ENCODE measurements at regions of chr1 and their contacts with region 1.

Region 1: GRCh38 chr1:203625628-203626019 is 1.0 kb upstream of the ATP2B4 start:
- DNase-seq: peak; percentile 89
- H3K4me3 Mint-ChIP-seq: peak overlapping the region; percentile 96
- H3K27ac Mint-ChIP-seq: peak overlapping the region; percentile 97
- H3K4me1 Mint-ChIP-seq: peaks cover 78% of the 10 kb centered on the region
- H3K27me3 Mint-ChIP-seq: no peaks in the 10 kb centered on the region

Region 2: DNA sequence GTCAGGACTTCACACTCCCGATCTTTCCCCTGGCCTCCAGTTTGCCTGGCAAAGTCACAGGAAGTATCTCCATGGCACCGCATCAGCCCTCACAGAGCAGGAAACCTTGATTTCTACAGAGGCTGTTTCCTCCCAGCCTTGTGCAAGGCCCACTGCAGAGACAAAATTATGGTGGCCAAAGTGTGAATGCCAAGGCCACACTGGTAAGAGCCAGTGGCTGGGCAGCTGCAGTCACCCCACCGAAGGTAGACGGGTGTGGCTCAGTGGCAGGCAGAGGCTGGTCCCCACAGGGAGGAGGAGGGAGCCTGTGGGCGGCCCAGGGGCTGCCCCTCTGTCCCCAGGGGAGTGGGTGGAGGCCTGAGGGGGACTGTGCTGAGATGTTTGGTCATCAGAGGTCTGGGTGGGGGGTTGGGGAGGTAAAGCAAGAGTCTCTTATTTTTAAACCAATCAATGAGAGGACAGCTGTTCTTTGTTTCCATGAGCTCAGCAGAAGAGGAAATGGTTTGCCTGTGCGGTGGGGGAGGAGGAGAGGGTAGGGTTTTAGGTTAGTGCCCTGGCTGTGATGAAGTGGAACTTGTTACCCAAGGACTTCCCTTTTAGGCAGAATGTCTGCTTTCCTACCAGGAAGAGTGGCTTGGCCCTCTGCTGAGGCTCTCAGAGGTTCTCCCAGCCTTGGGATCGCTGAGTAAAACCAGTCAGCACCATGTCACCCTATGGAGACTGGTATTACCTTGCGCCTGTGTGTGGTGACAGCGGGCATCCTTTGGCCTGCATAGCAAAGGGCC is 338.3 kb before region 1 on chr1:
- intact Hi-C with region 1: loop called (anchors 5 kb)
- DNase-seq: peak; percentile 95
- H3K4me3 Mint-ChIP-seq: peak overlapping the region; percentile 82
- H3K27ac Mint-ChIP-seq: peak overlapping the region; percentile 97
- H3K4me1 Mint-ChIP-seq: peaks cover 69% of the 10 kb centered on the region
- H3K27me3 Mint-ChIP-seq: peaks cover 2% of the 10 kb centered on the region

Region 3: GRCh38 chr1:203584035-203584434 is 41.6 kb before region 1 on chr1:
- intact Hi-C with region 1: no loop called
- DNase-seq: no peak
- H3K4me3 Mint-ChIP-seq: no peak overlapping the region
- H3K27ac Mint-ChIP-seq: no peak overlapping the region
- H3K4me1 Mint-ChIP-seq: no peaks in the 10 kb centered on the region
- H3K27me3 Mint-ChIP-seq: peaks cover 33% of the 10 kb centered on the region

Region 4: DNA sequence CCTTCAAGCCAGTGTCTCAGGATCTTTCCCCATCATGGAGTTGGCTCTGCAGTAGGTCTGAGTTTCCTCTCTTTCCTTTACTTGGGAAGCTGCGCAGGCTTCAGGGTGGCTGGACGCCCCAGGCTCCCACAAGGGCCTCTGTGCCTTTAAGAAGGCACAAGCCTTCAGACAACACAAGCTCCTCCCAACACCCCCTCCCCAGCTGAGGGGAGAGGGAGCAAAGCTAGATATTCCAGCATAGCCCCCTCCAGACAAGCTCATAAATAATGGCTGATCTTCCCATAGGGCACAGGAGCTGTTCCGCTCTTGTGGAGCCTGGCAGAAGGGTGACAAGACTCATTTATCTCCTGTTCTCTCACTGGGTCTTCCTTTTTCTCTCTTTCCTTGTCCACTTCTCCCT is 26.9 kb before region 1 on chr1:
- intact Hi-C with region 1: no loop called
- DNase-seq: no peak
- H3K4me3 Mint-ChIP-seq: no peak overlapping the region
- H3K27ac Mint-ChIP-seq: no peak overlapping the region
- H3K4me1 Mint-ChIP-seq: peaks cover 22% of the 10 kb centered on the region
- H3K27me3 Mint-ChIP-seq: no peaks in the 10 kb centered on the region

Region 5: DNA sequence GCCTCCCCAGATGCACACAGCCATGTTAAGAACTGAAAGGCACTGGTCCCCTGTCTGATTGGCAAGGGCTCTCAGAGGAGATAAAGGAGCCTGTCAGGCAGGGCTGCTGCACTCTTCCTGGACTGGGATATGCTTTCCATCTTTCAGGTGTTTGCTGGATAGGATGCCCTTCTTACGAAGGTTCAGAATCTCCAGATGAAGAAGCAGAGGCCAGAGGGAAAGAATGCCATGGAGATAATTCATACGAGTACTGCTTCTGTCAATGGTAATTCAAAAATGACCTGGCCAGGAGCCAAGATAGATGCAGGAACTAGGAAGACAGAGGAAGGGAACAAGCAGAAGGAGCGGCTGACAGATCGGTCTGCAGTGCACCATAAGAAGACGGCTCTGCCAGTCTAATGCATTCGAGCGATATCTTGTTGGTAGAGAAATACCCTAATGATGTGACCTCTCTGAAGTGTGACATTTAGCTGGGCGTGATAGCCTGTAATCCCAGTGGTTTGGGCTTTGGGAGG is 15.6 kb before region 1 on chr1:
- intact Hi-C with region 1: loop called (anchors 1 kb)
- DNase-seq: no peak
- H3K4me3 Mint-ChIP-seq: no peak overlapping the region
- H3K27ac Mint-ChIP-seq: peak overlapping the region; percentile 41
- H3K4me1 Mint-ChIP-seq: peaks cover 57% of the 10 kb centered on the region
- H3K27me3 Mint-ChIP-seq: peaks cover 2% of the 10 kb centered on the region

Region 6: GRCh38 chr1:203663294-203663693 is 37.7 kb after region 1 on chr1:
- intact Hi-C with region 1: loop called (anchors 1 kb)
- DNase-seq: peak; percentile 68
- H3K4me3 Mint-ChIP-seq: peak overlapping the region; percentile 29
- H3K27ac Mint-ChIP-seq: peak overlapping the region; percentile 69
- H3K4me1 Mint-ChIP-seq: peaks cover 54% of the 10 kb centered on the region
- H3K27me3 Mint-ChIP-seq: no peaks in the 10 kb centered on the region

Region 7: DNA sequence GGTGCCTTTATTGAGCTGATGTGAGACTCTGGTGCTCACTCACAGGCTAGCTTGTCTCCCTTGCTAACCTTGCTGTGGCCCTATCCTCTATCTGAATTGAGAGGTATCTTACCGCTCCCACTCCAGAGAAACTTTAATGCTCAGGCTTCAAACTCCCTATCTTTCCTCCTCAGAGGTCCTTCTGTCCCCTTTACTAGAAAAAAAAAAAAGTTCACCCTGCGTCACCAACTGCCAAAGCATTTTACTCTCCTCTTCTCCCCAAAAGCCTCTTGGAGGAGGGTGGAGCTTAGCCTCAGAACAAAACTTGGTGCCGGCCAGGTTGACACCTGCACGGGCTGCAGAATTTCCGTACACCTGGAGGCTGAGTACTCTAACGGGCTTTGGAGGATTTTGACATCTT is 56.1 kb after region 1 on chr1:
- intact Hi-C with region 1: no loop called
- DNase-seq: peak; percentile 61
- H3K4me3 Mint-ChIP-seq: peak overlapping the region; percentile 70
- H3K27ac Mint-ChIP-seq: peak overlapping the region; percentile 92
- H3K4me1 Mint-ChIP-seq: peaks cover 33% of the 10 kb centered on the region
- H3K27me3 Mint-ChIP-seq: no peaks in the 10 kb centered on the region

Region 8: DNA sequence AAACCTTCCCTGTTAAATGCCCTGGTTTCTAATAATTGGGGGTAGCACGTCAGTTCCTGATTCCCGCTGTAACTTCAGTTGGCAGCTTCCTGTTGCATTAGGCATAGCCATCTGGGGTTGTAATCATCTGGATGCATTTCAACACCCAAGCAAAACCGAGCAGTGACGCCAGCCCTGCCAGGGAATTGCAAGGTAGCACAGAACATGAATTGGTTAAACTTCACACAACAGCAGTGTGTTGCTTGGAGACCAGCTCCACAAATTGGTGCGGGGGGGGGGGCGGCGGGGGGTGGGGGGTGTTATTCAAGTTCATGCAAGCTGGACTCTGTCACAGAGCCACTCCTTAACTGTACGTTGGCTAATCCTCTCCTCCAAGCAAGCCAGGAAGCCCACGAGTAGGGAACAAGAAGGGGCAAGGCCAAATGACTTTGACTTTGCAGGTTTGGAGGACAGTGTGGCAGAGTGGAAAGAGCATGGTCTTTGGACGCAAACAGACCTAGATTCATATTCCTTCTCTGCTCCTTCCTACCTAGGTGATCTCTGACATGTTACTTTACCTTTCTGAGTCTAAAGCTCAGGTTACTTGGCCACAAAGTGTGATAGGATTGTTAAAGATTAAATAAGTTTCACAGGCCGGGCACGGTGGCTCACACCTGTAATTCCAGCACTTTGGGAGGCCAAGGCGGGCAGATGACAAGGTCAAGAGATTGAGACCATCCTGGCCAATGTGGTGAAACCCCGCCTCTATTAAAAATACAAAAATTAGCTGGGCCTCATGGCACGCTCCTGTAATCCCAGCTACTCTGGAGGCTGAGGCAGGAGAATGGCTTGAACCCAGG is 144.1 kb after region 1 on chr1:
- intact Hi-C with region 1: loop called (anchors 2 kb)
- DNase-seq: no peak
- H3K4me3 Mint-ChIP-seq: no peak overlapping the region
- H3K27ac Mint-ChIP-seq: peak overlapping the region; percentile 51
- H3K4me1 Mint-ChIP-seq: peaks cover 27% of the 10 kb centered on the region
- H3K27me3 Mint-ChIP-seq: no peaks in the 10 kb centered on the region